Astrocyte of the cerebellum (primary cell): ENCODE measurements at regions of chr11 and their contacts with region 1.

Region 1: GRCh38 chr11:131674051-131674755 is 303.8 kb downstream of the NTM start:
- DNase-seq: peak; percentile 53
- H3K4me3 ChIP-seq: no peak overlapping the region
- CTCF ChIP-seq: peak; percentile 97

Region 2: GRCh38 chr11:131064373-131064991 is 609.7 kb before region 1 on chr11:
- in situ Hi-C with region 1: loop called (anchors 25 kb)
- DNase-seq: peak; percentile 51
- H3K4me3 ChIP-seq: no peak overlapping the region
- CTCF ChIP-seq: peak; percentile 94

Region 3: GRCh38 chr11:131609337-131609736 is 64.9 kb before region 1 on chr11:
- in situ Hi-C with region 1: no loop called
- DNase-seq: peak; percentile 95
- H3K4me3 ChIP-seq: no peak overlapping the region
- CTCF ChIP-seq: no peak

Region 4: GRCh38 chr11:131637469-131638175 is 36.6 kb before region 1 on chr11:
- in situ Hi-C with region 1: no loop called
- DNase-seq: no peak
- H3K4me3 ChIP-seq: no peak overlapping the region
- CTCF ChIP-seq: no peak

Region 5: GRCh38 chr11:131756479-131757110 is 82.4 kb after region 1 on chr11:
- in situ Hi-C with region 1: loop called (anchors 5 kb)
- DNase-seq: no peak
- H3K4me3 ChIP-seq: no peak overlapping the region
- CTCF ChIP-seq: no peak